ENCODE measurements at regions of chr2 and their contacts with region 1.

Region 1: DNA sequence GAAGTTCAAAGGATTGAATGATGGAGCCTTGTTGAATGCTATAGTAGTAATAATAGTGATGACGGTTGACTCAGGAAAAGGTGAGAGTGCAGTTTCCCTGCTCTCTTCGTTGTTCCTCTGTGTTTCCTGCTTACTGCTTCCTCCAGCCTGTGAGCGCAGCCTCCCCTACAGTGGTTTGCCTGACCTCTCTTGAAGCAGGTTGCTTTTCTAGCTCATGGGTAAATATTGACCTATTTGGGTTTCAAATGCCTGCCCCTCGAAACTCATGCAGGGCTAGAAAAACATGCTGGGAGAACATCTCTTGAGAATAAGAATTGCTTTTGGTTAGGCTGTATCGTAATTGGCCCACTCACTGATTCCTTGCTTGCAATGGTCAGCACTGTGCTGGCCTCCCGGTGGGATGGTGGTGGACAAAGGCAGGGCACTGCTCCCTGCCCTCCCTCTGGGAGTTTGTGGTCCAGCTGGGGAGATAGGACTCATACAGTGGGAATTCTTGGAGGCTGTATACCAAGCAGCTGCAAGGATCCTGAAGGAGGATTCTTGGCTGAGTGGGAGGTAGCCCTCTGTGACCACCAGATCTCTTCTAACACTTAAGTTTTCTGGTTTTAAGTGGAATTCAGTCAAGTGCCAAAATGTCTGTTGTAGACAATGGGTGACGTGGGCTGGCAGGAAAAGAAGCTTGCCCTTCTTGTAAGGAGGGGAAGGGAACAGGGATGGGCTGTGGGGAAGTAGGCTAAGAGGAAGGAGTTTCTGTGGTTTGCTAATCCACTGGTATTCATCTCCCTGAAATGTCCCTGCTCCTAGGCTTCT is 5.4 kb upstream of the RNF181 start:
- DNase-seq: no peak
- ATAC-seq: no peak
- H3K4me3 Mint-ChIP-seq: no peak overlapping the region
- H3K27ac Mint-ChIP-seq: no peak overlapping the region
- H3K4me1 Mint-ChIP-seq: peaks cover 24% of the 10 kb centered on the region
- H3K27me3 Mint-ChIP-seq: no peaks in the 10 kb centered on the region
- CTCF ChIP-seq: no peak

Region 2: DNA sequence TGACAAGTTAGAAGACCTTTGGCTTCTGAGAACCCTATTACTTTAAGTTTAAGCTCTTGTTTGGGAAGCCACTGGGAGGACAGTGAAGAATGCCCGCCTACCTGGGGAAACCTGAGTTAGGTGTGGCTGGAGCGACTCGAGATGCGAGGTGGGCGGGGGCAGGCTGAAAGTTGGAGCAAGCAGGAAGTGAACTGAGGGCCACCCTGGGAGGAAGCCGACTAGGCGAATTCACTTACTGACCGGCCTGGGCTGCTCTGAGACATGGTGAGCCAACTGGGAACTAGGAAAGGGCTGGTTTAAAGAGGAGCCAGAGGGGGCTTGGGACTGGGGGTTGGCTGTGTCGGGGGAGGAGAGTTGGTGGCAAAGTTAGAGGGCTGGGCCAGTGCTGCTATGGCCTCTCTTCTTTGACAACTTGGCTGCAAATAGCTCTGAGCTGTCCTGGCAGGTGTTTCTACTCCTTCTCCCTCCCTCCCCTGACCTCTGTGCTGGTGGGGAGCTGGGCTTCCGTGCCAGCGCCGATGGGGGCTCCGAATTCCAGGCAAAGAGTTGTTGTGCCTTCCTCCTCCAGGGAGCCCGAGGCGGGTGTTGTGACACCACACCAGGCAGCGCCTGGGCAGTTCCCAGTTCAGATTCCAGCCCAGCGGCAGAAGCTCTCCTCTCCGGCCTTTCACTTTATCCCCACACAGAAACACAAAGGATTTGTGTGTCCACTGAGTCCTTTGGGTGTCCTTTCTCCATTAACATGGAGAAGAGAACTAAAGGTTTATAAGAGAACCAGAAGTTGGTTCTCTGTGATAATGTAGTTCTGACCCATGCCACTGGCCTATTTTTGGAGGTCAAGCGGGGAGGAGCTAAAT is 12.6 kb before region 1 on chr2 and contains the start of gene VAMP8:
- CTCF ChIA-PET with region 1: interaction called, 5 read pairs
- POLR2A ChIA-PET with region 1: interaction called, 10 read pairs
- intact Hi-C with region 1: no loop called
- DNase-seq: peak; percentile 78
- ATAC-seq: peak; percentile 76
- H3K4me3 Mint-ChIP-seq: peak within 1 kb of the TSS; percentile 96
- H3K27ac Mint-ChIP-seq: peak within 1 kb of the TSS; percentile 90
- H3K4me1 Mint-ChIP-seq: peaks cover 22% of the 10 kb centered on the region
- H3K27me3 Mint-ChIP-seq: no peaks in the 10 kb centered on the region
- CTCF ChIP-seq: no peak
- total RNA-seq, gene VAMP8: 84.5 to 91.1 TPM